Activated B cell treated with CpG ODN at 0.5 μM for 24 hours (primary cell): ENCODE measurements at regions of chr2 and their contacts with region 1.

Region 1: DNA sequence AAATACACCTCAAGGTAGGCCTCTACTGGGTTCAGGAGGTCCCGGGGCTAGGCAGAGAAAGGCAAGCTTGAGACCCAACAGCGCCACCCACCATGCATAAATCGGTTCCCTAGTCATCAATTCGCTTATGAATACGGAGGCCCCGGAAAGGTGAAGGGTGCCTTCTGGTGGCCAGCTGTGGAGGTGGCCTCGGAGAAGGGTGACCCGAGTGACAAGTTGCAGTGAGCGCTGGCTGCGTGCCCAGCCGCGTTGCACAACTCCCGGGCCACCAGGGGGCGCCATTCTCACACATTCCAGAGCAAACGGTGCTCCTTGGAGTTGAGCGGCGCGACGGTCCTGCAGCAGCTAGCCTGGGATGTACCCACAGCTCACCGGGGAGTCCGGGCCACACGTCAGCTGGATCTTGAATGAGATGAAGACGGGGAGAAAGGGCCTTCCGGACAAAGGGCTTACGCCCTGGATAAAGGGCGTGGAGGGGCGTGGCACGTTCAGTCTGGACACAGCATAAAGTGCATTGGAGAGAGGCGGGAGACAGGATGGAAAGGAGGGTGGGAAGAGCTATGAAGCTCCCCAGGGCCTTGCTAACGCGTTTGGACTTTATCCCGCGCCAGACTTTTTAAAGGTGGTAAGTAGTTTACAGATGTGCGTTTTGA is 20.4 kb downstream of the TMSB10 start:
- DNase-seq: peak; percentile 97
- ATAC-seq: peak; percentile 86
- H3K4me3 Mint-ChIP-seq: peak overlapping the region; percentile 92
- H3K27ac Mint-ChIP-seq: peak overlapping the region; percentile 86
- H3K4me1 Mint-ChIP-seq: peaks cover 53% of the 10 kb centered on the region
- H3K27me3 Mint-ChIP-seq: no peaks in the 10 kb centered on the region
- CTCF ChIP-seq: peak; percentile 86

Region 2: GRCh38 chr2:84417453-84418145 is 508.3 kb before region 1 on chr2:
- CTCF ChIA-PET with region 1: no interaction called
- POLR2A ChIA-PET with region 1: no interaction called
- intact Hi-C with region 1: no loop called
- DNase-seq: no peak
- ATAC-seq: no peak
- H3K4me3 Mint-ChIP-seq: no peak overlapping the region
- H3K27ac Mint-ChIP-seq: no peak overlapping the region
- H3K4me1 Mint-ChIP-seq: no peaks in the 10 kb centered on the region
- H3K27me3 Mint-ChIP-seq: peaks cover 2% of the 10 kb centered on the region
- CTCF ChIP-seq: no peak

Region 3: GRCh38 chr2:84741296-84741765 is 184.5 kb before region 1 on chr2:
- CTCF ChIA-PET with region 1: interaction called, 13 read pairs
- POLR2A ChIA-PET with region 1: no interaction called
- intact Hi-C with region 1: loop called (anchors 1 kb)
- DNase-seq: no peak
- ATAC-seq: peak; percentile 90
- H3K4me3 Mint-ChIP-seq: no peak overlapping the region
- H3K27ac Mint-ChIP-seq: no peak overlapping the region
- H3K4me1 Mint-ChIP-seq: peaks cover 5% of the 10 kb centered on the region
- H3K27me3 Mint-ChIP-seq: peaks cover 13% of the 10 kb centered on the region
- CTCF ChIP-seq: no peak

Region 4: DNA sequence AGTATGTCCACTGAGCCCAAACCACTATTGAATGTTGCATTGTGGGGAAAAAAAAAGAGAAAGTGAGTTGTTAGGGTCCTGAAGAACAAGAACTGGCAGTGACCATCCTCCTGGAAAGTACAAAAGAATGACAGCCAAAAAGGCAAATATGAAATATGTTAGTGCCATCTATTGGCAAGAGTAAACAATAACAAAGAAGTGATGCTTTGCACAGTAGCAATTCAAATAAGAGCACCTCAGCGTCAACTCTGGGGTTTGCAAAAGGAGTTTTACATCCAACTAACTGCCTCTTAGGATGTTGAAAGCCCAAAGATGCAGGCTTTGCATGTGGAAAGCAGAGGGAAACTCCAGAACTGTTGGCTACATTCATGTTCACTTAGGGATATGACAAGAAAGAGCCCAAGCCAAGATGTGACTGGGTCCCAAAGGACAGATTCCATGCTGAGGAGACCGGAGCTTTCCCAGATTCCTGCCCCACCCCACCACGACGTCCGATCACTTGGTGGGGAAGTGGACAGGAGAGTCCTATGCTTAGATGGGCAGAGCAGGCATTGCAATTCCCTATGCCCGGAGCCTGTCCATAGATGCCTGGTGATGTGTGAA is 60.6 kb before region 1 on chr2:
- CTCF ChIA-PET with region 1: interaction called, 17 read pairs
- POLR2A ChIA-PET with region 1: interaction called, 5 read pairs
- intact Hi-C with region 1: loop called (anchors 1 kb)
- DNase-seq: no peak
- ATAC-seq: no peak
- H3K4me3 Mint-ChIP-seq: no peak overlapping the region
- H3K27ac Mint-ChIP-seq: no peak overlapping the region
- H3K4me1 Mint-ChIP-seq: peaks cover 2% of the 10 kb centered on the region
- H3K27me3 Mint-ChIP-seq: peaks cover 4% of the 10 kb centered on the region
- CTCF ChIP-seq: no peak

Region 5: GRCh38 chr2:84881581-84882414 is 44.1 kb before region 1 on chr2:
- CTCF ChIA-PET with region 1: interaction called, 68 read pairs
- POLR2A ChIA-PET with region 1: interaction called, 33 read pairs
- intact Hi-C with region 1: loop called (anchors 1 kb)
- DNase-seq: peak; percentile 75
- ATAC-seq: peak; percentile 75
- H3K4me3 Mint-ChIP-seq: peak overlapping the region; percentile 94
- H3K27ac Mint-ChIP-seq: peak overlapping the region; percentile 93
- H3K4me1 Mint-ChIP-seq: peaks cover 40% of the 10 kb centered on the region
- H3K27me3 Mint-ChIP-seq: no peaks in the 10 kb centered on the region
- CTCF ChIP-seq: no peak

Region 6: GRCh38 chr2:84905181-84906107 is 20.4 kb before region 1 on chr2 and contains the start of gene TMSB10:
- CTCF ChIA-PET with region 1: interaction called, 67 read pairs
- POLR2A ChIA-PET with region 1: interaction called, 326 read pairs
- intact Hi-C with region 1: loop called (anchors 1 kb)
- DNase-seq: peak; percentile 94
- ATAC-seq: peak; percentile 84
- H3K4me3 Mint-ChIP-seq: peak within 1 kb of the TSS; percentile 93
- H3K27ac Mint-ChIP-seq: peak within 1 kb of the TSS; percentile 87
- H3K4me1 Mint-ChIP-seq: peaks cover 55% of the 10 kb centered on the region
- H3K27me3 Mint-ChIP-seq: no peaks in the 10 kb centered on the region
- CTCF ChIP-seq: no peak
- total RNA-seq, gene TMSB10: 925 and 1,069 TPM in 2 replicates

Region 7: DNA sequence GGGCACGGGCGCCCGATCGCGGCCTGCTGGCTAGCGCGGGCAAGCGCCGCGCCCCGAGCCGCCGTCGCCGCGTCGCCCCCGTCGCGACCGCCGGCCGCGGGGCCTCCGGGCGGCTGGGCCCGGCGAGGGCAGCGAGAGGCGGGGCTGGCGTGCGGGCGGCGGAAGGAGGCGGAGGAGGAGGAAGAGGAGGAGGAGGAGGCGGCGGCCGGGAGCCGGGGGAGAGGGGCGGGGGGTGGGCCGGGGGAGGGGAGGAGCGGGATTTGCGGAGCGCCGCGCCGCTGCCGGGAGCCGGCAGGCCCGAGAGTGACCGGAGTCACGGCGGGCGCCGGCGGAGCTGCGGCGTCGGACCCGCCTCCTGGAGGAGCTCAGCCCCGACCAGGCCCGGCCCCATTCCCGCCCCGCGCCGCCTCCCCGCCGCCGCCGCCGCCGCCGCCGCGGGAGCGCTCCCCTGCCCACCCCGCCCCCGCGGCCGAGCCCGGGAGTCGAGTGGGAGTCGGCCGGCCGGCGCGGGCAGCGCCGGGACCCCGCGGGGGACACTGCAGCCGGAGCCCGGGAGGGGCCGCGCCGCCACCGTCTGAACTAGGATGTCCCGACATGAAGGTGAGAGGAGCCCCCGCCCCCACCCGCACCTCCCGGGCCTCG is 45.1 kb after region 1 on chr2 and contains the start of gene KCMF1:
- CTCF ChIA-PET with region 1: interaction called, 19 read pairs
- POLR2A ChIA-PET with region 1: interaction called, 25 read pairs
- intact Hi-C with region 1: loop called (anchors 1 kb)
- DNase-seq: peak; percentile 77
- ATAC-seq: peak; percentile 56
- H3K4me3 Mint-ChIP-seq: peak within 1 kb of the TSS; percentile 97
- H3K27ac Mint-ChIP-seq: peak within 1 kb of the TSS; percentile 98
- H3K4me1 Mint-ChIP-seq: peaks cover 57% of the 10 kb centered on the region
- H3K27me3 Mint-ChIP-seq: no peaks in the 10 kb centered on the region
- CTCF ChIP-seq: no peak
- total RNA-seq, gene KCMF1: 77.1 and 96.6 TPM in 2 replicates

Region 8: GRCh38 chr2:85119900-85120299 is 194.1 kb after region 1 on chr2:
- CTCF ChIA-PET with region 1: no interaction called
- POLR2A ChIA-PET with region 1: no interaction called
- intact Hi-C with region 1: no loop called
- DNase-seq: no peak
- ATAC-seq: no peak
- H3K4me3 Mint-ChIP-seq: no peak overlapping the region
- H3K27ac Mint-ChIP-seq: no peak overlapping the region
- H3K4me1 Mint-ChIP-seq: no peaks in the 10 kb centered on the region
- H3K27me3 Mint-ChIP-seq: peaks cover 11% of the 10 kb centered on the region
- CTCF ChIP-seq: no peak

Region 9: DNA sequence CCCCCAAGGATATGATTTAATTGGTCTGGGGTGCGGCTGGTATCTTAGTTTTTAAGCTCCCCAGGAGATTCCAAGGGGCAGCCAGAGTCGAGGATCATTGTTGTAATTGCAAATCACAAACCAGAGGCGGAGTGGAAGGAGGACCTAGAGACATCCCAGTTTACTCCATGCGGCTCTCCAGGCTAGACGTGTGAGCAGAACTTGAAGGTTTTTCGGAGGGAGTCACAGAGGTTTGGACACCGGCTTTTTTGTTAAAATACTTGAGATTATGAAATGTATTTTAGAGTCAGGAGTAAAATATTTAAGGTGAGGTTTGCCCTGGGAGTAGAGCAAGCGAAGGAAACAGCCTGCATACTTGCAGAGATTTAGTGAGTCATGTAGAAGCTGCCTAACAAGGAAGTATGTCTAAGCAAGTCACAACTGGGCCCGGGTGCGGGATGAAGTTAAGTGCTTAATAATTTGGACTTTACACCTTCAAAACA is 362.4 kb after region 1 on chr2:
- CTCF ChIA-PET with region 1: interaction called, 7 read pairs
- POLR2A ChIA-PET with region 1: interaction called, 4 read pairs
- intact Hi-C with region 1: loop called (anchors 1 kb)
- DNase-seq: no peak
- ATAC-seq: no peak
- H3K4me3 Mint-ChIP-seq: no peak overlapping the region
- H3K27ac Mint-ChIP-seq: no peak overlapping the region
- H3K4me1 Mint-ChIP-seq: peaks cover 12% of the 10 kb centered on the region
- H3K27me3 Mint-ChIP-seq: peaks cover 2% of the 10 kb centered on the region
- CTCF ChIP-seq: no peak

Region 10: DNA sequence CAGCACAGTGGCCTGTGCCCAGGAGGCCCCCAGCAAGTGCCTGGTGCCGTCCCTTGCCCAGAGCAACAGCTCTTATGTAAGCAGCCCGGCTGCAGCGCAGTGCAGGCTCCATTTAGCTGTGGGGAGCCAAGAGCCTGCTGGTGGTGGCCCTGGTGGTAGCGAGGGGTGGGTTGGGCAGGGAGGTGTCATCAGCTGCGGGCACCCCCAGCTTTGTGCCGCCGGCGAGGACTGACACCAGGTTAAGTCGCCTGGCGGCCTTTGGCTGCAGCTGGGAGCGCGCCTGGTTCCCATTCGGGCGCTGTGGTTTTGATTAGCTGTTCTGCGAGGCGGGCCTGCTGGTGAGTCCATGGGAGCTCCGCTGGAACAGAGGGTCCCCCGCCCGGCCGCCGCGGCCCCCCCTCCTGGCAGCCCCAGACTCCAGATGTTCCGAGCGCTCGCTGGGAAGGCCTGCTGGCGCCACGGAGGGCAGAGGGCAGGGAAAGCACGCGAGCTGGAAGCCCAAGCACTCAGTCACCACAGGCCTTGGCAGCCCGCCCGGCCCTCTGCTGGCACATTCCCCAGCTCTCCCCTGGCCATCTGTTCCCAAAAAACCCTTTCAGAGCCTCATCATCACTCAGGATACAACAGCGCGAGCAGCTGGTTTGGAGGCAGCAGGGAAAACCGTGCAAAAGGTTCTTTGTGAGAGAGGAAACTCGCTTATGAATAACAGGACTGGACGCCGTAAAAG is 846.3 kb after region 1 on chr2:
- CTCF ChIA-PET with region 1: no interaction called
- POLR2A ChIA-PET with region 1: no interaction called
- intact Hi-C with region 1: no loop called
- DNase-seq: no peak
- ATAC-seq: no peak
- H3K4me3 Mint-ChIP-seq: no peak overlapping the region
- H3K27ac Mint-ChIP-seq: no peak overlapping the region
- H3K4me1 Mint-ChIP-seq: no peaks in the 10 kb centered on the region
- H3K27me3 Mint-ChIP-seq: peaks cover 45% of the 10 kb centered on the region
- CTCF ChIP-seq: no peak